ENCODE measurements at regions of chr4 and their contacts with region 1.

Region 1: GRCh38 chr4:171582961-171583581 is 230.1 kb upstream of the GALNTL6 start:
- DNase-seq: no peak
- ATAC-seq: no peak
- H3K4me3 ChIP-seq: no peak overlapping the region
- H3K27ac ChIP-seq: no peak overlapping the region
- H3K4me1 ChIP-seq: no peaks in the 10 kb centered on the region
- H3K27me3 ChIP-seq: no peaks in the 10 kb centered on the region
- CTCF ChIP-seq: no peak
- POLR2A ChIP-seq: no peak
- RAD21 ChIP-seq: no peak

Region 2: DNA sequence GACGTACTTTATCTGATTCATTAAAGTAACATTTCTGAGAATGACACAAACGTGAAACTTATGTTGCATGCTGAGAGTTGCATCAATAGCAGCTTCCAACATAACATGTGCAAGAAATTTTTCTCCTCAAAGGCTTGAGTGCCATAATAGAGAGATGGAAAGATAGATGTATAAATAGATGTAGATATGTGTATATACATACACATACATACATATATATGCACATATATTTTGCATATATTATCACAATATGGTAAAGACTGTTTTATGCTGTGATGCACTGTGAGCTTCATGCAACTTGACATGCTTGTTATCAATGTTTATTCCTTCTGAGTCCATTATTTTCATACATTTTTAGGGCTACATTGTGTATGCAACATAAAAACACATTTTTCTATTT is 40.4 kb before region 1 on chr4:
- CTCF ChIA-PET with region 1: no interaction called
- POLR2A ChIA-PET with region 1: no interaction called
- dilution Hi-C with region 1: no loop called
- in situ Hi-C with region 1: no loop called
- intact Hi-C with region 1: loop called (anchors 1 kb)
- DNase-seq: no peak
- ATAC-seq: no peak
- H3K4me3 ChIP-seq: no peak overlapping the region
- H3K27ac ChIP-seq: no peak overlapping the region
- H3K4me1 ChIP-seq: no peaks in the 10 kb centered on the region
- H3K27me3 ChIP-seq: no peaks in the 10 kb centered on the region
- CTCF ChIP-seq: no peak
- POLR2A ChIP-seq: no peak
- RAD21 ChIP-seq: no peak